GM23248 (cell line): ENCODE measurements at regions of chr11 and their contacts with region 1.

Region 1: GRCh38 chr11:10307442-10308207 is 2.8 kb downstream of the ADM start:
- DNase-seq: peak; percentile 98
- H3K4me3 ChIP-seq: peak overlapping the region; percentile 96
- H3K27ac ChIP-seq: peak overlapping the region; percentile 91
- H3K4me1 ChIP-seq: peaks cover 13% of the 10 kb centered on the region; the same call in 1 of the 2 replicates
- H3K27me3 ChIP-seq: no peaks in the 10 kb centered on the region

Region 2: GRCh38 chr11:9784602-9785315 is 522.9 kb before region 1 on chr11:
- in situ Hi-C with region 1: no loop called
- DNase-seq: no peak
- H3K4me3 ChIP-seq: no peak overlapping the region
- H3K27ac ChIP-seq: peak overlapping the region; percentile 22
- H3K4me1 ChIP-seq: peaks cover 28% of the 10 kb centered on the region
- H3K27me3 ChIP-seq: no peaks in the 10 kb centered on the region

Region 3: GRCh38 chr11:9868624-9869023 is 439.0 kb before region 1 on chr11:
- in situ Hi-C with region 1: no loop called
- DNase-seq: no peak
- H3K4me3 ChIP-seq: no peak overlapping the region
- H3K27ac ChIP-seq: no peak overlapping the region
- H3K4me1 ChIP-seq: no peaks in the 10 kb centered on the region
- H3K27me3 ChIP-seq: no peaks in the 10 kb centered on the region

Region 4: DNA sequence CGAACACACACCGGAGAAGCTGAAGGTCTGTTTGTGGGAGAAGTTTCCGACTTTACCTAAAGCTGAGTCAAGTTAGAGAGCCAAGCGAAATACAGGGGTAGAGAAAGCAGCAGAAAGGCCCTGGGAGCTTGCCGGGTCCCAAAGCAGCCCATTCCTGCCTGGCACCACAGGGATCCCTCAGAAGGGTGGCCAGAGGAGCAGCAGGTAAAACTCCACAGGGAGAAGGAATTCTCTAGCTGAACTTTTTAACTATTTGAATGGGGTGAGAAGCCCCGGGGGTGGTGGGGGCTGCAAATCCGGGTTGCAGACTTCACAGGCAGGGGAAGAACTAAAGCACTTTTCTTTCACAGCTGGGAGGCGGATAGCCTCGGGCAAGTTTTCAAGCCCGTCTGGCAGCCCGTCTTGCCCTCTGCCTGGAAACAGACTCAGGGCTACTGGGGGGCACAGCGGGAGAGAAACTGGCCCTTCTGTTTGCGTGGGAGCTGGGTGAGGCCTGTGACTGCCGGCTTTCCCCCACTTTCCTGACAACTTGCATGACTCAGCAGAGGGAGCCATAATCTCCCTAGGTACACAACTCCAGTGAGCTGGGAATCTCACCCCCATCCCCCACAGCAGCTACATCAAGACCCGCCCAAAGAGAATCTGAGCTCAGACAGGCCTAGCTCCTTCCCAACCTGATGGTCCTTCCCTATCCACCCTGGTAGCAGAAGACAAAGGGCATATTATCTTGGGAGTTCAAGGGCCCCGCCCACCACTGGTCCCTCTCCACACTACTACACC is 324.6 kb before region 1 on chr11:
- in situ Hi-C with region 1: loop called (anchors 25 kb)
- DNase-seq: no peak
- H3K4me3 ChIP-seq: no peak overlapping the region
- H3K27ac ChIP-seq: no peak overlapping the region
- H3K4me1 ChIP-seq: peaks cover 12% of the 10 kb centered on the region
- H3K27me3 ChIP-seq: no peaks in the 10 kb centered on the region

Region 5: DNA sequence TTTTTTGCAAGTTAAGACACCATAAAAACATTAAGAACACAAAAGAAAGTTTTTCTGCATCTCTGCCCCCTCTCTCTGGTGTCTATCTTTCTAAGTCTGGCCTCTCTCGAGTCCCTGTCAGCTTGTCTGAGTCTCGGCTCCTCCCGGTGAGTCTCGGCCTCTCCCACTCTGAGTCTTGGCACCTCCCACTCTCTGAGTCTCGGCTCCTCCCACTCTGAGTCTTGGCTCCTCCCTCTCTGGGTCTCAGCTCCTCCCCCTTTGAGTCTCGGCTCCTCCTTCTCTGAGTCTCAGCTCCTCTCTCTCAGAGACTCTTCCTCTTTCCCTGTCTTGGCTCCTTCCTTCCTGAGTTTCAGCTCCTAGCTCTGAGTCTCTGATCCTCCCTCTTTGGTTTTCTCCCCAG is 74.9 kb after region 1 on chr11:
- in situ Hi-C with region 1: no loop called
- DNase-seq: peak; percentile 63
- H3K4me3 ChIP-seq: no peak overlapping the region
- H3K27ac ChIP-seq: peak overlapping the region; percentile 88
- H3K4me1 ChIP-seq: peaks cover 62% of the 10 kb centered on the region
- H3K27me3 ChIP-seq: no peaks in the 10 kb centered on the region